Naive thymus-derived CD4-positive, alpha-beta T cell (primary cell): ENCODE measurements at regions of chr7 and their contacts with region 1.

Region 1: DNA sequence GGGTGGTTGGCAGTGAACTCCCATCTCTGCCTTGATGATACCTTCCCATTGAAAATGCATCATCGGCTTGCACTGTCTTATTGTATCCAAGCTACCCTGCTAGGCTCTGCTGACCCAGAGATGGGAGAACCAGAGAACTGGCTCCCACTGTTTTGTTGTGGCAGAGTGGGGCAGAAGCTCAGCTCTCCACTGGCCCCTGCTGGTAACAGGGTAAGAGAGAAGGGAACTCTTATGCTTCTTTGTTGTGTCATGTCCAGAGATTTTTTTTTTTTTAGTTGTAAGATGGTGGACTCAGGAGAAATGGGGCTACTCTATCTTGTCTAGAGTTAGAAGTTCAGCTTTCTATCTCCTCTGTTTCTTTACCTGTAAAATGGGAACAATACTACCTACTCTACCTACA is 100.5 kb upstream of the SDK1 start:
- DNase-seq: peak in 3 of 9 donors; percentile 5 to 8 (median 8)
- ATAC-seq: no peak
- H3K4me3 ChIP-seq: no peak overlapping the region
- H3K4me3 Mint-ChIP-seq: no peak overlapping the region
- H3K27ac ChIP-seq: no peak overlapping the region
- H3K27ac Mint-ChIP-seq: no peak overlapping the region
- H3K4me1 ChIP-seq: no peaks in the 10 kb centered on the region
- H3K4me1 Mint-ChIP-seq: peaks cover 0 to 4% (median 0%) of the 10 kb centered on the region in 7 donors
- H3K27me3 ChIP-seq: no peaks in the 10 kb centered on the region
- H3K27me3 Mint-ChIP-seq: peaks cover 0 to 13% (median 0%) of the 10 kb centered on the region in 5 donors

Region 2: GRCh38 chr7:2886900-2887299 is 313.6 kb before region 1 on chr7:
- CTCF ChIA-PET with region 1: no interaction called
- POLR2A ChIA-PET with region 1: no interaction called
- intact Hi-C with region 1: loop called in 1 of 2 experiments (anchors 1 kb)
- DNase-seq: peak in 8 of 9 donors; percentile 28 to 59 (median 50)
- ATAC-seq: peak; percentile 89
- H3K4me3 ChIP-seq: no peak overlapping the region
- H3K4me3 Mint-ChIP-seq: peak overlapping the region in 4 of 10 donors; percentile 16 to 38 (median 36)
- H3K27ac ChIP-seq: no peak overlapping the region
- H3K27ac Mint-ChIP-seq: peak overlapping the region in 4 of 9 donors; percentile 3 to 57 (median 24)
- H3K4me1 ChIP-seq: no peaks in the 10 kb centered on the region
- H3K4me1 Mint-ChIP-seq: peaks cover 0 to 9% (median 6%) of the 10 kb centered on the region in 7 donors
- H3K27me3 ChIP-seq: no peaks in the 10 kb centered on the region
- H3K27me3 Mint-ChIP-seq: no peaks in the 10 kb centered on the region